ENCODE measurements at regions of chr7 and their contacts with region 1.

Region 1: GRCh38 chr7:107471292-107472070 is 1.6 kb downstream of the GPR22 start:
- DNase-seq: no peak
- ATAC-seq: no peak

Region 2: DNA sequence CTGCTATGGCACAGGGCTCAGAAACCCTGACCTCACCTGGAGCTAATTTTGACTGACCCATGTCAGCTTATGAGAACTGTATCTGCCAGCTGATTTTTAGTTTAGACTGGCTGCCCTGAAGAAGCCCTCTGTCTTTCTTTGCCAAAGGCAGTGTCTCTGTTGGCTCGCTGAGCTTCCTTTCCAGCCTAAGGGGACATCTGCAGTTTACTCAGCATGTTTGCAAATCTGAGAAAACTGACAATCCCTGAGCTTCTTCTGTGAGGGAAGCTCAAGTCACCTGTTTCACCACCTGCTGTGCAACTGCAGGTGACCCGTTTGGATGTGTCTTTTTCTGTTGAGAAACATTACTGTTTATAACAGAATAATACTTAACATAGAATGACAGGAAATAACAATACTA is 381.0 kb before region 1 on chr7:
- intact Hi-C with region 1: no loop called
- DNase-seq: no peak
- ATAC-seq: no peak

Region 3: DNA sequence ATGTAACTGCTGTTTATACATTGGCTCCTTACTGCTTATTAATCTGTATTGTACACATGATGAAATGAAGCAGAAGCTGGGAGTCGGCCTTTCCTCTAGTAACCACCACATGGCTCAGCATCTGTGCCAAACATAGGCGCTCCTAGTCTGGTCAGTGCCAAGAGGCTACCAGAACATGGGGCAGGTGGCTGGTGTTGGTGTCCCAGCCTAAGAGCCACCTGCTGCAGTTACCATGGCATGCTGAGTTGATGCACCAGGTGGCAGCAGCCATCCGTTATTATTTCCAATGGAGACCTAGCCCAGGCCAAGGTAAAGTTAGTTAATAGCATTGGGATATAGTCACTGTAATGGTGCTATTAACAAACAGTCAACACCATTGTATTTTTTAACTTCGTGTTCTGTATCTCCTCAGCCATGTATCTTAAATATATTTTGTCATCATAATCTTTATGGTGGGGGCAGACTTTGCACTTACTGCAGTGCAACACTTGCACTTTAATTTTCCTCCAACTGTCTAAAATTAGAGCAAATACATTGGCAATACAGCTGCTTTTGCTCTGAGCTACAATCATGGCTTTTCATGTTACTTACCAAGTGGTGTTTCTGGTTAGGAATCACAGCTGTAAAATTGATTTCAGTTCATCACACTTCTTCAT is 269.6 kb before region 1 on chr7:
- intact Hi-C with region 1: loop called (anchors 2 kb)
- DNase-seq: no peak
- ATAC-seq: peak; percentile 89